RWPE1 (cell line): ENCODE measurements at regions of chr5 and their contacts with region 1.

Region 1: GRCh38 chr5:154863291-154864080 is 5.1 kb downstream of the CNOT8 start:
- DNase-seq: no peak
- H3K27ac ChIP-seq: no peak overlapping the region
- CTCF ChIP-seq: no peak

Region 2: DNA sequence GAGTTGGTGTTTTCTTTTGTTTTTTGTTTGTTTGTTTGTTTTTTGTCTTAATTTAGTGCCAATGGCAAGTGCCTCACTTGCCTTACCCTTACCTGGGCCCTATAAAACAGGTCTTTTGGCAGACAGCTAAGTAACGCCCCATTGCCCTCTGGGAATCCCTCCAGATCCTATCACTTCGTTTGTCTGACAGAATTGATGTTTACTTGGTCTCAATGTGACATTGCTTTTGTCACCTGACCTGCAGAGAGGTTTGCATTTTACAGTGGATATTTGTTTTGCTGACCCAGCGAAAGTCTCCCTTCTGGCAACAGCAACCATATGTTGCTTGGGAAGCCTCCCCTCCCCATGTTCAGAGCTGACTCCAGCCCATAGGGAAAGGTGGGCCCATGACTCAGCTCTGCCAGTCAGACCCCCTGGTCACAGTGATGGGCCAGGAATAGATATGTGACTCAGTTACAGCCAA is 162.3 kb before region 1 on chr5:
- CTCF ChIA-PET with region 1: no interaction called
- POLR2A ChIA-PET with region 1: interaction called, 16 read pairs
- DNase-seq: no peak
- H3K27ac ChIP-seq: no peak overlapping the region
- CTCF ChIP-seq: no peak

Region 3: DNA sequence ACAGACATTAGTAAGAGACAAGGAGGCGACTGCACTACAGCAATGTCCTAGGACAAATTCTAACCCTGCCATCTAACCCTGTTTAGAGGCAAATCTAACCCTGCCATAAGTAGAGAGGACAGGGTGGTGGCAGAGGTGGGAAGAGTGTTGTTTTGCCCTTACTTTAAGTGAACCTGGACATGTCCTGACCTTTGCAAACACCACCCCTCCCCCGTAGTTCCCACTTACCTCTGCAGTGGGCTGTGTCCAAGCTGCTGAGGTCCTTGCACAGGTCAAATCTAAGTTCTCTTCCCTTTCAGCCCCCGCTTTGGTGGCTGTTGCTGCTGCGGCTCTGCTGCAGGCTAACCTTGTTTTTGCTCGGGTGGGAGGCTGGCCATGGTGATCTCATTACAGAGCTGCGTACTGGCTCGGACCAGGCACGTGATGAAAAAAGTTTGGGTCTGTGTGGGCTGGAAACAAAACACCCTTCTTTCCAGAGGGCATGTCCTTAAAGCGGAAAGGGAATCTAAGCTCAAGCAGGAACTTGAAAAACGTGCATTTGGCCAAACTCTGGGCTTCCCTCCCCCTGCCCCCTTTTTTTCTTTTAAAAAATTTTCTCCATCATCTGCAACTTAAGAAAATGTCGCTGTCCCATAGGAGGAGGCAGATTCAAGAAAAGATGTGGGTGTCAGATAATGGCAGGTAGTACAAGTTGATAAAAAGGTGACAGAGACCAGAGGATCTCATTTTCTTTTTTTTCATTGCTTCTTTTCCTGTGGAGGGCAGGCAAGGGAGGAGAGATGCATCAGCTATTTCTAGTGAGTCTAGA is 13.0 kb before region 1 on chr5 and contains the start of gene FAXDC2:
- CTCF ChIA-PET with region 1: no interaction called
- POLR2A ChIA-PET with region 1: no interaction called
- DNase-seq: peak; percentile 61
- H3K27ac ChIP-seq: peak within 1 kb of the TSS; percentile 80
- CTCF ChIP-seq: no peak